ENCODE measurements at regions of chr12 and their contacts with region 1.

Region 1: GRCh38 chr12:106223485-106224354 is 24.1 kb downstream of the CKAP4 start:
- DNase-seq: peak; percentile 69
- ATAC-seq: peak; percentile 82

Region 2: DNA sequence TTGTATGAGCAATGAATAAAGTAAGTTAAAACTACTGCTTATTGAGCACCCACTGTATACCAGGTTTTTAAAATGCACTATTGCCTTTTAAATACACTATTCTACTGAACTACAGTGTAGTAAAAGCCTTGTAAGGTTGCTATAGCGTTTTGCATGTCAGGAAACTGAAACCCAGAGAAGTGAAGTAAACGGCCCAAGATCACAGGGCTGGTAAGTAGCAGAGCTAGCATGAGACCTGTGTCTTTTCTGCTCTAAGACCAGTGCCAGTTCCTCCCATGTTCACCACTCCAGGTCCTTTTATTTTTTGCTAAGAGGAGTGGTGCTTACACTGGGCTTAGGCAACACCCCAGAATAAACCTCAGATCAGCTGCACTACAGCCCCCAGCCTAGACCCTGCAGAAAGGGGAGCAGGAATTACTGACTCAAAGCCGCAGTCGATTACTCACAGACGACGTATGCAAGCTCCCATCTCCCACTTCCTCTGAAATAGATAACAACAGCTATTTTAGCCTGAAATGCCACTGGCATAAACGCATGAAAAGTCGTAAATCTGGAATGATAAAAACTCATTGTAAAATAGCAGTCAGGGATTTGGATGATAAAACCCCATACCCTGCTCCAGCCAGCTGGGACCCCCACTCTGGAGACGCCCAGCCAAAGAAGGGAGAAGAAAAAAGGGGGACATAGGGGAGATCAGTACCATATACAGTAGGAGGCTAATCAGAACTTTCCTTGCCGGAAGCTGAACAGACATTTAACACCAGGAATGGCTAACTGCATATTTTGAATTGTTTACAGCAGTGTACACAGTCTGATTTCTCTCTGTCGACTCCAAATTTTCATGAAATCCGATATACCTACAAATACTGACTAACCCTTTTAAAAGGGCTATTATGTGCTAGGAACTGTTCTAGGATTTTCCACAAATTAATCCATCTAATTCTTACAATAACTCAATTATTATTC is 193.2 kb before region 1 on chr12:
- intact Hi-C with region 1: no loop called
- DNase-seq: no peak
- ATAC-seq: no peak

Region 3: DNA sequence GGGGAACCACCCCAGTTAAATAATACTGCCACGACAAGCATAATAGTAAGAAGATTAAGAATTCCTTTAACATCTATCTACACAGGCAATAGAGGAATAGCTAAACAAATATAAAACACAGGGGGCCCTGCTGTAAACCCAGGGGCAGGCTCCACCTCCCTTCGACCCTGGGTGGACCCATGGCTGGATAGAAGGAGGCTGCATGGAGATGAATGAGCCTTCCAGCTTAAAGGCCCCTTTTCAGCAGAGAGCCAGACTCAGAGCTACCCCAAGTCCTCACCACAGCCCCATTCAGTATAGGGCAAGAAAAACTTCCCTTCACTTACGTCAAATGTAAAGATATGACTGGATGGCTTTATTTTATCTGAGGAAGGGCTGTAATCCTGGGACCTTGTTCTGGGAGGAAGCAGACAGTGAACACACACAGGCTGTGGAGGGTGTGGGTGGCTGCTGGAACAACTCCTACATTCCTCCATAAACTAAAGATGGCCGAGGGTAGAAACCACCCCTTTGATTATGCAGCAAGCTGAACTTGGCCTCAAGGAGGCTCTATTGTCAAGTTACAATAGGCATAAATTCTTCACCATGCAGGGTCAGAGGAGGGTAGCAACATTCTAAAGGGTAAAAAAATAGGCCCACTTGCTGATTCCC is 115.4 kb before region 1 on chr12:
- intact Hi-C with region 1: no loop called
- DNase-seq: no peak
- ATAC-seq: peak; percentile 26

Region 4: GRCh38 chr12:106281804-106282203 is 58.1 kb after region 1 on chr12:
- intact Hi-C with region 1: loop called (anchors 2 kb)
- DNase-seq: no peak
- ATAC-seq: no peak

Region 5: DNA sequence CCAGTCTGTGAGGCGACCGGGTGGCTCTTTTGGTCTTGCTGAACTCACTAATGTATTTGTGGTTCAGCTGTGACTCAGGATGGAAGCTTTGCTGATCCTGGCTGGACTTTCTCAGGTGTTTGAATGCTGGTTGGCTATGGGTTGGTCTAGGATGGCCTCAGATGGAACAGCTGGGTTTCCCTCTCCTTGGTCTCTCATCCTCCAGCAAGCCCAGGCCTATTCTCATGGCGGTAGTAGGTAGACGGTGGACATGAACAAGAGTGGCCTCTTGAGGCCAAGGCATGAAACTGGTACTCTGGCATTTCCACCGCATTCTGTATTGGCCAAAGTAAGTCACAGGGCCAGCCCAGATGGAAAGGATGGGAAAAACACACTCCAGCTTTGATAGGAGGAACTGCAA is 122.0 kb after region 1 on chr12:
- intact Hi-C with region 1: loop called (anchors 5 kb)
- DNase-seq: no peak
- ATAC-seq: peak; percentile 36